B cell (primary cell): ENCODE measurements at regions of chr12 and their contacts with region 1.

Region 1: GRCh38 chr12:49110464-49111155 is at the start of gene LMBR1L:
- DNase-seq: peak; percentile 99
- ATAC-seq: peak; percentile 93
- H3K4me3 ChIP-seq: peak within 1 kb of the TSS; percentile 61 to 99 (median 86)
- H3K4me3 Mint-ChIP-seq: peak within 1 kb of the TSS; percentile 96
- H3K27ac ChIP-seq: peak within 1 kb of the TSS; percentile 88 to 90
- H3K27ac Mint-ChIP-seq: peak within 1 kb of the TSS; percentile 96
- H3K4me1 ChIP-seq: peaks cover 16 to 23% of the 10 kb centered on the region in 2 donors
- H3K4me1 Mint-ChIP-seq: peaks cover 44% of the 10 kb centered on the region
- H3K27me3 ChIP-seq: no peaks in the 10 kb centered on the region
- H3K27me3 Mint-ChIP-seq: no peaks in the 10 kb centered on the region
- CTCF ChIP-seq: peak; percentile 66
- total RNA-seq, gene LMBR1L: 182 and 187 TPM in 2 replicates

Region 2: GRCh38 chr12:49018261-49019119 is 92.1 kb before region 1 on chr12 and contains the start of gene PRKAG1:
- CTCF ChIA-PET with region 1: interaction called, 3 read pairs
- POLR2A ChIA-PET with region 1: no interaction called
- intact Hi-C with region 1: loop called (anchors 1 kb)
- DNase-seq: peak; percentile 98
- ATAC-seq: peak; percentile 88
- H3K4me3 ChIP-seq: peak within 1 kb of the TSS; percentile 79 to 88 (median 86)
- H3K4me3 Mint-ChIP-seq: peak within 1 kb of the TSS; percentile 91
- H3K27ac ChIP-seq: peak within 1 kb of the TSS; percentile 95 to 99
- H3K27ac Mint-ChIP-seq: peak within 1 kb of the TSS; percentile 98
- H3K4me1 ChIP-seq: peaks cover 18 to 21% of the 10 kb centered on the region in 2 donors
- H3K4me1 Mint-ChIP-seq: peaks cover 29% of the 10 kb centered on the region
- H3K27me3 ChIP-seq: no peaks in the 10 kb centered on the region
- H3K27me3 Mint-ChIP-seq: no peaks in the 10 kb centered on the region
- CTCF ChIP-seq: peak; percentile 74
- total RNA-seq, gene PRKAG1: 58.6 and 60.0 TPM in 2 replicates

Region 3: DNA sequence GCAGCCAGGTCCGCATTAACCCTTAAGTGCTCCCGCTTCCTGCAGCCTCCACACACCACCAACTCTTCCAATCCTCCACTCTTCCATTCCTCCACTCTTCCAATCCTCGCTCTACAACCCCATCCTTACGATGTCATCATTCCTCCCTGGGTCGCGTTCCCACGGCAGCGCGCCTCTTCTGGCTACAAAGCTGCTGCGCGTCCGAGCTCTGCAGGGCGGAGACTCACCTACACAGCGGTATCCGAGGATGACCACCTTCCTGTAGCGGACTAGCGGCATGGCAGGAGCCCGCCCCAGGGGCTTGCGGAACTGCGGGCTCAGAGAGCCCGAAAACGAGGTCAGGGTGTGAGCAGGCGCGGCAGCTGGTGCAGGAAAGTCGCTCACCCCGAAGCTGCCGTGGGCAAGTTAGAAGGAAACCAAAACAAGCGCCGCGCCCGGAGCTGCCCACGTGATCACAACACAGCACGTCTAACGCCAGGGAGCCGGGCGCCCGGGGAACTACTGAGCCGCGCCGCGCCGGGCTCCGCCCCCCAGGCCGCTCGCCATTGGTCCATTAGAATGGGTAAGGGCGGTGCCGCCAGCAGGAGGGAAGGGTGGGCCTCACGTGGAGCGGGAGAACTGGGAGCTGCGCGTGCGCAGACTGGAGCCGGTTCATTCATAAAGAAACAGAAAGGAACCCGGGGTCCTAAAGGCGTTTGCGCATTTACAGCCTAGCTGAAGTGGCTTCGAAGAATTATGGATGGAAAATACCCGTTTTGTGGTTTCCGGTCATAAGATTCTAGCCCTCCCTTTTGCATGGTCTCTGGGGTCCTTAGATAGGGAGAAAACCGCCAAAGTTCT is 40.9 kb before region 1 on chr12 and contains the start of gene RHEBL1:
- CTCF ChIA-PET with region 1: no interaction called
- POLR2A ChIA-PET with region 1: interaction called, 5 read pairs
- intact Hi-C with region 1: loop called (anchors 1 kb)
- DNase-seq: peak; percentile 99
- ATAC-seq: peak; percentile 100
- H3K4me3 ChIP-seq: peak within 1 kb of the TSS; percentile 69 to 96 (median 87)
- H3K4me3 Mint-ChIP-seq: peak within 1 kb of the TSS; percentile 94
- H3K27ac ChIP-seq: peak within 1 kb of the TSS; percentile 61 to 92
- H3K27ac Mint-ChIP-seq: peak within 1 kb of the TSS; percentile 86
- H3K4me1 ChIP-seq: peaks cover 10 to 15% of the 10 kb centered on the region in 2 donors
- H3K4me1 Mint-ChIP-seq: peaks cover 19% of the 10 kb centered on the region
- H3K27me3 ChIP-seq: no peaks in the 10 kb centered on the region
- H3K27me3 Mint-ChIP-seq: no peaks in the 10 kb centered on the region
- CTCF ChIP-seq: no peak
- total RNA-seq, gene RHEBL1: 3.0 TPM in 2 replicates

Region 4: DNA sequence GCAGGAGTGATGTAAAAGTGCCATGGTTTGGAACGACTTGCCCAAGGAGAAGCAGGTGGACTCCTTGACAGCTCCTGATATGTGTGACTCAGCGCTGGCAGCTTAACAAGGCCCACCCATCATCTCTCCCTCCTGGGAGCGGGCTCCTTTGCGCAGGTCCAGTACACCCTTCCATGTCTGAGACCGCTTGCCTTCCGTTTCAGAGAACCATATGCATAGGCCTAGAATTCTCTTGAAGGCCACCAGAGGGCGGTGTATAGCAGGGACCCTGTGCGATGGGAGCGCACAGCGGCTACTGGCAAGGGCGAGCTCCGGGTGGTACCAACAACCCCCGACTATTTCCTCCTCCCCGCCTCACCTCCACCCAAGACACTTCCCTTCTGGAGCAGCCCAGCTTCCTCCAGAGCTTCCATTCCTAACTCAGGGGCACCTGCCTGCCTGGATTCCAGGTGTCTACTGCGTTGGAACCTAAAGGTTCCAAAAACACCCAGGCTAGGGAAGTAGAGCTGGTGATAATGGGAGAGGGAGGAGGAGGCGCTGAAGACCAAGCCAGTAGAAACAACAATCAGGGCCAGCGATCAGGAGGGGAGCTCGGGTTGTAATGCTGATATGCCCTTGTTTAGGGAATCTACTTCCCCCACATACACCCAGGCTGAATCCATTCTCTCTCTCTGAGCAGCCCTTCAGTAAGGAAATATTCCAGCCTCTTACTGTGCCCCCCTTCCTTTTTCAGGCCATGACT is 22.2 kb before region 1 on chr12:
- CTCF ChIA-PET with region 1: interaction called, 193 read pairs
- POLR2A ChIA-PET with region 1: interaction called, 5 read pairs
- intact Hi-C with region 1: no loop called
- DNase-seq: peak; percentile 88
- ATAC-seq: peak; percentile 92
- H3K4me3 ChIP-seq: peak overlapping the region in 1 of 5 experiments; percentile 10
- H3K4me3 Mint-ChIP-seq: peak overlapping the region; percentile 70
- H3K27ac ChIP-seq: no peak overlapping the region
- H3K27ac Mint-ChIP-seq: no peak overlapping the region
- H3K4me1 ChIP-seq: peaks cover 47 to 48% of the 10 kb centered on the region in 2 donors
- H3K4me1 Mint-ChIP-seq: peaks cover 38% of the 10 kb centered on the region
- H3K27me3 ChIP-seq: peaks cover 0 to 57% (median 37%) of the 10 kb centered on the region in 4 experiments
- H3K27me3 Mint-ChIP-seq: peaks cover 46% of the 10 kb centered on the region
- CTCF ChIP-seq: peak; percentile 96

Region 5: GRCh38 chr12:49098035-49098451 is 12.6 kb before region 1 on chr12:
- CTCF ChIA-PET with region 1: interaction called, 103 read pairs
- POLR2A ChIA-PET with region 1: interaction called, 5 read pairs
- intact Hi-C with region 1: loop called (anchors 1 kb)
- DNase-seq: peak; percentile 74
- ATAC-seq: peak; percentile 77
- H3K4me3 ChIP-seq: no peak overlapping the region
- H3K4me3 Mint-ChIP-seq: no peak overlapping the region
- H3K27ac ChIP-seq: no peak overlapping the region
- H3K27ac Mint-ChIP-seq: peak overlapping the region; percentile 20
- H3K4me1 ChIP-seq: peaks cover 15 to 16% of the 10 kb centered on the region in 2 donors
- H3K4me1 Mint-ChIP-seq: peaks cover 18% of the 10 kb centered on the region
- H3K27me3 ChIP-seq: peaks cover 0 to 22% (median 17%) of the 10 kb centered on the region in 4 experiments
- H3K27me3 Mint-ChIP-seq: peaks cover 17% of the 10 kb centered on the region
- CTCF ChIP-seq: peak; percentile 80

Region 6: GRCh38 chr12:49121047-49121696 is 10.6 kb after region 1 on chr12:
- CTCF ChIA-PET with region 1: interaction called, 4 read pairs
- POLR2A ChIA-PET with region 1: interaction called, 10 read pairs
- intact Hi-C with region 1: no loop called
- DNase-seq: no peak
- ATAC-seq: no peak
- H3K4me3 ChIP-seq: no peak overlapping the region
- H3K4me3 Mint-ChIP-seq: no peak overlapping the region
- H3K27ac ChIP-seq: no peak overlapping the region
- H3K27ac Mint-ChIP-seq: no peak overlapping the region
- H3K4me1 ChIP-seq: no peaks in the 10 kb centered on the region
- H3K4me1 Mint-ChIP-seq: no peaks in the 10 kb centered on the region
- H3K27me3 ChIP-seq: no peaks in the 10 kb centered on the region
- H3K27me3 Mint-ChIP-seq: no peaks in the 10 kb centered on the region
- CTCF ChIP-seq: no peak

Region 7: GRCh38 chr12:49161092-49161795 is 50.6 kb after region 1 on chr12:
- CTCF ChIA-PET with region 1: no interaction called
- POLR2A ChIA-PET with region 1: interaction called, 3 read pairs
- intact Hi-C with region 1: loop called (anchors 2 kb)
- DNase-seq: peak; percentile 55
- ATAC-seq: peak; percentile 39
- H3K4me3 ChIP-seq: peak overlapping the region in 4 of 5 experiments; percentile 12 to 65 (median 40)
- H3K4me3 Mint-ChIP-seq: peak overlapping the region; percentile 88
- H3K27ac ChIP-seq: peak overlapping the region; percentile 66 to 75
- H3K27ac Mint-ChIP-seq: peak overlapping the region; percentile 87
- H3K4me1 ChIP-seq: peaks cover 27 to 31% of the 10 kb centered on the region in 2 donors
- H3K4me1 Mint-ChIP-seq: peaks cover 29% of the 10 kb centered on the region
- H3K27me3 ChIP-seq: no peaks in the 10 kb centered on the region
- H3K27me3 Mint-ChIP-seq: no peaks in the 10 kb centered on the region
- CTCF ChIP-seq: no peak